ENCODE measurements at regions of chr11 and their contacts with region 1.

Region 1: DNA sequence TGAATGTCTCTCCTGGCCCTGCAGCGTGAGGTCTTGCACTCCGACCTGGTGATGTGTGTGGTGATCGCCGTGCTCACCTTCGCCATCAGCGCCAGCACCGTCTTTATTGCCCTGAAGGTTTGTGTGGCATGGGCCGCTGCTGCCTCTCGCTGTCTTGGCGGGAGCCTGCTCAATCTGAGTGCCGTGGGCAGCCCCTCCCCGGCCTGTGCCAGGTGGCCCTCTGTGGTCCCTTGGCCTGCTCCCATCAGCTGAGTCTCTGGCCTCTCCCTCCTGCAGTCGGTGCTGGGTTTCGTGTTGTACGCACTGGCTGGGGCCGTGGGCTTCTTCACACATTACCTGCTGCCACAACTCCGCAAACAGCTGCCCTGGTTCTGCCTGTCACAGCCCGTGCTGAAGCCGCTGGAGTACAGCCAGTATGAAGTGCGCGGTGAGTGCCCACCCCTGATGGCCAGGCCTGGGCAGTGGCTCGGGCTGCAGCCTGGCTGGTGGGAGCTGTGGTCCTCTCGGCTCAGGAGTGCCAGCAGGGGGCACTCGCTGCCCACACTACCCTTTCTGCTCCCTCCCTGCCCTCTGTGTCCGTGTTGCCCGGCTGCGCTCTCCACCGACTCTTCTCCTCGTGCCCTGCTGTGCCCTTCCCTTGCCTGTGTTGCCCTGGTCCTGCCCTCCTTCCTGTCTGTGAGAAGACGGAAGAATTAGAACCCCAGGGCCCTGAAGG is 10.2 kb downstream of the PCNX3 start:
- DNase-seq: peak; percentile 56
- H3K4me3 ChIP-seq: no peak overlapping the region
- H3K27ac ChIP-seq: no peak overlapping the region
- H3K4me1 ChIP-seq: no peaks in the 10 kb centered on the region
- H3K27me3 ChIP-seq: no peaks in the 10 kb centered on the region
- CTCF ChIP-seq: peak; percentile 81 to 91
- POLR2A ChIP-seq: no peak

Region 2: GRCh38 chr11:63986156-63986931 is 1639.4 kb before region 1 on chr11 and contains the start of gene OTUB1:
- CTCF ChIA-PET with region 1: no interaction called
- POLR2A ChIA-PET with region 1: interaction called, 11 read pairs
- dilution Hi-C with region 1: no loop called
- intact Hi-C with region 1: no loop called
- DNase-seq: peak; percentile 91
- H3K4me3 ChIP-seq: peak within 1 kb of the TSS; percentile 71 to 99 (median 72)
- H3K27ac ChIP-seq: peak within 1 kb of the TSS; percentile 48
- H3K4me1 ChIP-seq: peaks cover 7% of the 10 kb centered on the region
- H3K27me3 ChIP-seq: no peaks in the 10 kb centered on the region
- CTCF ChIP-seq: no peak
- POLR2A ChIP-seq: peak; percentile 91
- total RNA-seq, gene OTUB1: 80.0 and 81.9 TPM in 2 replicates

Region 3: GRCh38 chr11:65615229-65615941 is 10.4 kb before region 1 on chr11 and contains the start of gene PCNX3:
- CTCF ChIA-PET with region 1: interaction called, 13 read pairs
- POLR2A ChIA-PET with region 1: interaction called, 3 read pairs
- dilution Hi-C with region 1: no loop called
- intact Hi-C with region 1: no loop called
- DNase-seq: peak; percentile 100
- H3K4me3 ChIP-seq: peak within 1 kb of the TSS; percentile 81 to 90 (median 87)
- H3K27ac ChIP-seq: peak within 1 kb of the TSS; percentile 88
- H3K4me1 ChIP-seq: peaks cover 39% of the 10 kb centered on the region
- H3K27me3 ChIP-seq: no peaks in the 10 kb centered on the region
- CTCF ChIP-seq: no peak
- POLR2A ChIP-seq: peak; percentile 59
- total RNA-seq, gene PCNX3: 53.8 and 53.9 TPM in 2 replicates

Region 4: GRCh38 chr11:65660038-65660437 is 34.3 kb after region 1 on chr11:
- CTCF ChIA-PET with region 1: no interaction called
- POLR2A ChIA-PET with region 1: no interaction called
- dilution Hi-C with region 1: no loop called
- intact Hi-C with region 1: no loop called
- DNase-seq: no peak
- H3K4me3 ChIP-seq: no peak overlapping the region
- H3K27ac ChIP-seq: no peak overlapping the region
- H3K4me1 ChIP-seq: peaks cover 18% of the 10 kb centered on the region
- H3K27me3 ChIP-seq: no peaks in the 10 kb centered on the region
- CTCF ChIP-seq: no peak
- POLR2A ChIP-seq: no peak

Region 5: GRCh38 chr11:65817835-65818742 is 192.3 kb after region 1 on chr11:
- CTCF ChIA-PET with region 1: interaction called, 10 read pairs
- POLR2A ChIA-PET with region 1: no interaction called
- dilution Hi-C with region 1: no loop called
- intact Hi-C with region 1: loop called (anchors 2 kb)
- DNase-seq: peak; percentile 80
- H3K4me3 ChIP-seq: peak overlapping the region; percentile 13 to 74 (median 66)
- H3K27ac ChIP-seq: no peak overlapping the region
- H3K4me1 ChIP-seq: no peaks in the 10 kb centered on the region
- H3K27me3 ChIP-seq: peaks cover 0 to 2% of the 10 kb centered on the region in 2 experiments
- CTCF ChIP-seq: peak; percentile 97 to 99
- POLR2A ChIP-seq: no peak

Region 6: GRCh38 chr11:66051766-66052663 is 426.2 kb after region 1 on chr11 and contains the start of gene SF3B2:
- CTCF ChIA-PET with region 1: no interaction called
- POLR2A ChIA-PET with region 1: no interaction called
- dilution Hi-C with region 1: no loop called
- intact Hi-C with region 1: no loop called
- DNase-seq: peak; percentile 99
- H3K4me3 ChIP-seq: peak within 1 kb of the TSS; percentile 67 to 93 (median 80)
- H3K27ac ChIP-seq: peak within 1 kb of the TSS; percentile 63
- H3K4me1 ChIP-seq: peaks cover 14% of the 10 kb centered on the region
- H3K27me3 ChIP-seq: peaks cover 0 to 1% of the 10 kb centered on the region in 2 experiments
- CTCF ChIP-seq: no peak
- POLR2A ChIP-seq: peak; percentile 88
- total RNA-seq, gene SF3B2: 179 and 196 TPM in 2 replicates

Region 7: GRCh38 chr11:66920978-66921784 is 1295.4 kb after region 1 on chr11:
- CTCF ChIA-PET with region 1: no interaction called
- POLR2A ChIA-PET with region 1: no interaction called
- dilution Hi-C with region 1: no loop called
- intact Hi-C with region 1: no loop called
- DNase-seq: no peak
- H3K4me3 ChIP-seq: no peak overlapping the region
- H3K27ac ChIP-seq: no peak overlapping the region
- H3K4me1 ChIP-seq: no peaks in the 10 kb centered on the region
- H3K27me3 ChIP-seq: no peaks in the 10 kb centered on the region
- CTCF ChIP-seq: no peak
- POLR2A ChIP-seq: no peak